Colonic mucosa (tissue), 4 donors: ENCODE measurements at regions of chr6 and their contacts with region 1.

Region 1: GRCh38 chr6:139539852-139540251 is 165.4 kb upstream of the CITED2 start:
- DNase-seq: no peak
- H3K4me3 ChIP-seq: no peak overlapping the region
- H3K27ac ChIP-seq: peak overlapping the region; percentile 33
- H3K4me1 ChIP-seq: peaks cover 6% of the 10 kb centered on the region
- H3K27me3 ChIP-seq: no peaks in the 10 kb centered on the region
- CTCF ChIP-seq: no peak

Region 2: DNA sequence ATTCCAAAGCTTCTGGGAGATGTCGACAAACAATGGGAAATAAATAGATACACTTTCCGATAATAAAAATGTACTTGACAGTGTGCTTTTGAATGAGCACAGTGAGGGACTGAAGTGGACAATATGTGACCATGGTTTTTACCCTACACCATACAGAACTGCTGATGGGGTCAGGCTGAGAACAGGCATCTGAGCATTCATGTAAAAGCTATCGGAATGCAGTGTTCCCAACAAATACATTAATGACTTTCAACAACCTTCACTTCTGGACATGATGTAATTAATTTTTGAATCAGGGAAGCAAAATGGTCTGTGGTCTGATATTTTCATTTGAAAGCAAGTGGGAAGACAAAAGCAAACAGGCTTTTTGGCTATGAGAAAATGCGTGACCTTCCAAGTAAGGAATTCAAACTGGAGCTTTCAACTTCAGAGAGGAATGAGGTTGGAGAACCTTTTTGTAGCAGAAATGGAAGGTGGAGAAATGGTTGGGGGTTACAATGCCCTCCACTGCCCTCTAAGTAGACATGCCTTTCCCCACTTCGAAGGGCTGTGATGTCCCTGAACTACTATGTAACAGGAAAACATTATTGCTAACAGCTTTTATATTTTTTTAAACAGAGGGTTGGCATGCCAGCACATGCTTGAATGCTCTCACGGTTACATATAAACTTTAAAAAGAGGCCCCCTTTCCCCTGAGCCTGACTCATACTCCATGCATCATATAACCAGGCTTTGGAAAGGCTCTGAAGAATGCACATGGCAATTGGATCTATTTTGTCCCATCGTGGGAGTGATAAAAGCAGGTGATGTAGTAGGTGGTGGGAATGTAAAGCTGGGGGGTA is 38.1 kb after region 1 on chr6:
- intact Hi-C with region 1: no loop called
- DNase-seq: no peak
- H3K4me3 ChIP-seq: no peak overlapping the region
- H3K27ac ChIP-seq: no peak overlapping the region
- H3K4me1 ChIP-seq: no peaks in the 10 kb centered on the region
- H3K27me3 ChIP-seq: no peaks in the 10 kb centered on the region
- CTCF ChIP-seq: no peak

Region 3: DNA sequence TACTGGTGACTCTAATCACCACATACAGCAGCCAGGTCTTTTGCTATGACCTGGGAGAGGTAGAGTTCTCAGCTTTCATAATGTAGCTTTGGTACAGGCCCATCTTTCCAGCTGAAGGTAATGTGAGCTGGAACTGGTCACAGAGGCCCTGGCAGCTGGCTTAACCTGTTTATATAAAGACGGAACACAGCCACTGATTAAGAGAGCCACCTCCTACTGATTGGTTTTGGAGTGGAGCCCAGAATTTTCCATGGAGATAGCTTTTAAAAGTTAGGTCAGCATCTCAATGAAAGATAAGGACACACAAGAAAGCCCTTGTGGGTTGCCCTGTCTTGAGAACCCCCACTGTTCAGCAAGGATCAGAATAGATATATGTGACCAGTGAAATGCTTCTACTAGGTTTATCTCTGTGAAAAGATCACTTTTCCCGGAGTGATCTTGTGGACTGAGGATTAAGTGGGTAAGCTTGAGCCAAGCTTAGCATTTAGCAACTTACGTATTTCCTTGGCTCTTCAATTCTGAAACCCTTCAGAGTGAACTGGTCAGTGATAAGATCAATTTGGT is 48.3 kb after region 1 on chr6:
- intact Hi-C with region 1: loop called (anchors 5 kb)
- DNase-seq: peak; percentile 86
- H3K4me3 ChIP-seq: no peak overlapping the region
- H3K27ac ChIP-seq: peak overlapping the region; percentile 73
- H3K4me1 ChIP-seq: peaks cover 3% of the 10 kb centered on the region
- H3K27me3 ChIP-seq: no peaks in the 10 kb centered on the region
- CTCF ChIP-seq: no peak

Region 4: DNA sequence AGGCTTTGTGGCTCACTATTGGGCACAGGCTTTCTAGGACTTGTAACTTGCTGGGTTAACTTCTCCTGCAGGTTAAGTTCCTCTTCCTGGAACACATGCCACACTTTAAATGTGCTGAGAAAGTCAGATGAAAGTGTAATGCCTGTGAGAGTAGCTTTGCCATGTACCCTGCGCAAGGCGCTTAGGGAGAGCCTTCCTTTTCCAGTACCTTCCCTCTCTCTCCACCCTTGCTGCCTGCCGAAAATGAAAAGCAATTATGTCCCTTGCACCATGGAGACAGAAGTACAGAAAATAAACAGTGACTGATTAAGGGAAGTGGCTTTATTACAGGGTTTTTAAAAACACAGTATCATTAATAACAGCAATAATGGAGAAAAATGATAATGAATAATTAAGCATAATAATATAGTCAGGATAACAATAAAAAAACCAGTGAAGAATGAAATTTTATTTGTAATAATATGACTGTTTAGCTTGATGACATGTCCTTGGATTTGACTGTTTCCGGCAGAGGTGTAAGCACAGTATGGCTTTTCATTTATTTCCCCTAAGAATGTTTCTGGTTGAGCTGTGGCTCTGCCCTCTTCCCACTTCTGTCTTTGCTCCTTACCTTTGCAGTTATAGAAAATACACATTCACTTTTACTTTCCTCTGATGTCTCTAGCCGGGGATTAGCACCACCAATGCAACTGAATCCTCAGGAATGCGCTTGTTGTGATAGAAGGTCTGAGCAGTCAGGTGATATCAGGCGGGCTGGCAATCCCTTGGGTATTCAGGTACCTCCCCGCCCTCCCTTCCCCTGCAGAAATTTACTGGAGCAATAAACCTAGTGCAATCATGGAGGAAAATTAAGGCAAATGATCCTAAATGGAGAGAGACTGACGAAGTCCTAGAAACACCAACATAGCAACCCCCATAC is 306.9 kb after region 1 on chr6:
- intact Hi-C with region 1: loop called (anchors 10 kb)
- DNase-seq: peak; percentile 68
- H3K4me3 ChIP-seq: no peak overlapping the region
- H3K27ac ChIP-seq: peak overlapping the region; percentile 21
- H3K4me1 ChIP-seq: no peaks in the 10 kb centered on the region
- H3K27me3 ChIP-seq: no peaks in the 10 kb centered on the region
- CTCF ChIP-seq: no peak